ENCODE measurements at regions of chr20 and their contacts with region 1.

Region 1: GRCh38 chr20:34704177-34705007 is at the start of gene TP53INP2:
- DNase-seq: peak; percentile 97
- ATAC-seq: peak; percentile 82
- total RNA-seq, gene TP53INP2: 146 TPM

Region 2: DNA sequence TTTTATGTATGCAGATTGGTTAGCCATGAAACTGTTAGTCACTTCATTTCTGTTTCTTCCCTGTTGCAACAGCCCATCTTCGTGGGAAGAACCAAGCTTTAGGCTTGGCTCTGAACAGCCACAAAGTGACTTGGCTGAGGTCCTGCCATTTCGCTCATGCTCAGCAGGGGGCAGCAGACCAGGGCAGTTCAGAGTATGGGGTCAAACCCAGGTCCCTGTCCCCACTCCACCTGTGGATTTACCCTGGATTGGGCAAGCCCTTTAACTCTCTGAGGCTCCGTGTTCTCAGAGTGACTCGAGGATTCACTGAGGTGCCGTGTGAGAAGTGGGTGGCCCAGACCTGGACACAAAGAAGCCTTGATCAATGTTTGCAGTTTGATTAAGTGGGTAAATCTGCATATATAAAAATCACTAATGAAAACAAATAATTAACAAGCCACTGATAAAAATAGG is 165.7 kb before region 1 on chr20:
- intact Hi-C with region 1: loop called (anchors 10 kb)
- DNase-seq: peak; percentile 71
- ATAC-seq: peak; percentile 57

Region 3: GRCh38 chr20:34997131-34997561 is 292.8 kb after region 1 on chr20:
- intact Hi-C with region 1: no loop called
- DNase-seq: peak; percentile 68
- ATAC-seq: peak; percentile 11

Measured in left ventricle myocardium superior (tissue), 1 donor.